ENCODE measurements at regions of chr7 and their contacts with region 1.

Region 1: GRCh38 chr7:136009488-136010079 is 32.4 kb upstream of the MTPN start:
- DNase-seq: peak in 4 of 5 donors; percentile 29 to 59 (median 50)
- H3K4me3 ChIP-seq: no peak overlapping the region
- H3K4me3 Mint-ChIP-seq: no peak overlapping the region
- H3K27ac ChIP-seq: no peak overlapping the region
- H3K27ac Mint-ChIP-seq: no peak overlapping the region
- H3K4me1 ChIP-seq: peaks cover 7% of the 10 kb centered on the region
- H3K4me1 Mint-ChIP-seq: peaks cover 0 to 8% (median 6%) of the 10 kb centered on the region in 4 donors
- H3K27me3 ChIP-seq: no peaks in the 10 kb centered on the region
- H3K27me3 Mint-ChIP-seq: no peaks in the 10 kb centered on the region

Region 2: GRCh38 chr7:135620980-135621850 is 388.4 kb before region 1 on chr7:
- CTCF ChIA-PET with region 1: interaction called, 3 read pairs
- POLR2A ChIA-PET with region 1: no interaction called
- intact Hi-C with region 1: loop called (anchors 1 kb)
- DNase-seq: peak in 4 of 5 donors; percentile 29 to 41 (median 34)
- H3K4me3 ChIP-seq: no peak overlapping the region
- H3K4me3 Mint-ChIP-seq: no peak overlapping the region
- H3K27ac ChIP-seq: no peak overlapping the region
- H3K27ac Mint-ChIP-seq: no peak overlapping the region
- H3K4me1 ChIP-seq: no peaks in the 10 kb centered on the region
- H3K4me1 Mint-ChIP-seq: no peaks in the 10 kb centered on the region
- H3K27me3 ChIP-seq: no peaks in the 10 kb centered on the region
- H3K27me3 Mint-ChIP-seq: no peaks in the 10 kb centered on the region

Region 3: DNA sequence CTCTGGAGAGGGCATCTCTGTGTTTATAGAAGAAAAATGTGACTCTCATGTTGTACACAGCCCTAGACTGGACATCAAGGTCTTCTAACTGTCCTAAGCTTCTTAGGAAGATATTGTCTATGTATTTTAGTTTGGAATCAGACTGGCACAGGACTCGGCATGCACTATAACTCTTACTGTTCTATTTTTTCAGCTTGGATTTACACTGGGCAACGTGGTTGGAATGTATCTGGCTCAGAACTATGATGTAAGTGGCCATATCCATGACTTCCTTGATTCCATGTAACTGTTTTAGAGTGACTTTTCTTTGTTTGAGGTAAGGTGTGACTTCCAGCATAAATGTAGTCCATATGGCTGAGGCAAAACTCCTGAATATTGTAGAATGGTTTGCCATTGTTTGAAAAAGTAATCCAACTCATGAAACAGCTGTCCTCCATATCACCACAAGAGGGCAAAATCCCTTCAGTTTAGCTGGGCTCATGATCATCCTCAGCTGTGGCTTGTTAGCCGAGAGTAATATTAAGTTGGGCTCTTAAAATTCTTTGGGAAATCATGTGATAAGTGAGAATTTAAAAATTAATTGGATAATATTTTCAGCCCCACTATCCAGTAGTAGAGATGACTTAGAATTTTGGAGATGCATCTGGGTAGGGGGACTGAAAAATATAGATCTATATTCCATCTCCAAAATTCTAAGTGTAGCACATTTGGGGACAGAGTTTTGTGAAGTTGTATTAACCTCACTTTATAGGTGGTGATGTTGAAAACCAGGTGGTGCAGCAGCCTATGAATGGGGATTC is 336.8 kb before region 1 on chr7:
- CTCF ChIA-PET with region 1: interaction called, 14 read pairs
- POLR2A ChIA-PET with region 1: no interaction called
- intact Hi-C with region 1: no loop called
- DNase-seq: peak in 2 of 5 donors; percentile 7 to 11
- H3K4me3 ChIP-seq: no peak overlapping the region
- H3K4me3 Mint-ChIP-seq: no peak overlapping the region
- H3K27ac ChIP-seq: no peak overlapping the region
- H3K27ac Mint-ChIP-seq: no peak overlapping the region
- H3K4me1 ChIP-seq: no peaks in the 10 kb centered on the region
- H3K4me1 Mint-ChIP-seq: peaks cover 11 to 42% (median 24%) of the 10 kb centered on the region in 4 donors
- H3K27me3 ChIP-seq: no peaks in the 10 kb centered on the region
- H3K27me3 Mint-ChIP-seq: no peaks in the 10 kb centered on the region

Region 4: DNA sequence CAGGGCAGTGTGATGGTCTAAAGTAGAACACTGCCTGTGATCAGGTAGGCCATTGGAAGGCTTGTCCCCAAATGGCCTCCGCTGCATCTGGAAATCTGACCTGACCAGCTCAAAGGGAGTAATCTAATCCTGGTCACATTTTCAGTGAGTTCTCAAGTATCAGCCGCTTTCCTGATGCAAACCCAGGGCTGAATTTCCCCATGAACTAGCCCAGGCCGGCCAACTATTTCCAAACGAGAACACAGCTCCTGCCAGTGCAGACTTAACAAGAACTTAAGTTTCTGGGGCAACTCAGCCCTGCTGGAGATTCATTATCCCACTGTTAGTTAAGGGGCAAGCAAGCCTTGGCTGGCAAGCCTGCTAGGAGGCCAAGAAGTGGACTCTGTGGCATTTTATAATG is 201.4 kb before region 1 on chr7:
- CTCF ChIA-PET with region 1: interaction called, 187 read pairs
- POLR2A ChIA-PET with region 1: no interaction called
- intact Hi-C with region 1: no loop called
- DNase-seq: no peak
- H3K4me3 ChIP-seq: no peak overlapping the region
- H3K4me3 Mint-ChIP-seq: no peak overlapping the region
- H3K27ac ChIP-seq: no peak overlapping the region
- H3K27ac Mint-ChIP-seq: no peak overlapping the region
- H3K4me1 ChIP-seq: no peaks in the 10 kb centered on the region
- H3K4me1 Mint-ChIP-seq: peaks cover 0 to 5% (median 3%) of the 10 kb centered on the region in 4 donors
- H3K27me3 ChIP-seq: no peaks in the 10 kb centered on the region
- H3K27me3 Mint-ChIP-seq: no peaks in the 10 kb centered on the region

Region 5: GRCh38 chr7:136023134-136023875 is 13.7 kb after region 1 on chr7:
- CTCF ChIA-PET with region 1: interaction called, 10 read pairs
- POLR2A ChIA-PET with region 1: no interaction called
- intact Hi-C with region 1: no loop called
- DNase-seq: no peak
- H3K4me3 ChIP-seq: no peak overlapping the region
- H3K4me3 Mint-ChIP-seq: no peak overlapping the region
- H3K27ac ChIP-seq: no peak overlapping the region
- H3K27ac Mint-ChIP-seq: no peak overlapping the region
- H3K4me1 ChIP-seq: no peaks in the 10 kb centered on the region
- H3K4me1 Mint-ChIP-seq: peaks cover 0 to 5% (median 0%) of the 10 kb centered on the region in 4 donors
- H3K27me3 ChIP-seq: no peaks in the 10 kb centered on the region
- H3K27me3 Mint-ChIP-seq: no peaks in the 10 kb centered on the region

Region 6: GRCh38 chr7:136056651-136057231 is 47.2 kb after region 1 on chr7:
- CTCF ChIA-PET with region 1: no interaction called
- POLR2A ChIA-PET with region 1: no interaction called
- intact Hi-C with region 1: no loop called
- DNase-seq: no peak
- H3K4me3 ChIP-seq: no peak overlapping the region
- H3K4me3 Mint-ChIP-seq: no peak overlapping the region
- H3K27ac ChIP-seq: no peak overlapping the region
- H3K27ac Mint-ChIP-seq: no peak overlapping the region
- H3K4me1 ChIP-seq: no peaks in the 10 kb centered on the region
- H3K4me1 Mint-ChIP-seq: peaks cover 0 to 4% (median under 1%) of the 10 kb centered on the region in 4 donors
- H3K27me3 ChIP-seq: no peaks in the 10 kb centered on the region
- H3K27me3 Mint-ChIP-seq: no peaks in the 10 kb centered on the region

Measured in CD4-positive, alpha-beta memory T cell (primary cell).